Activated CD4-positive, alpha-beta T cell treated with anti-CD3 and anti-CD28 coated beads, Interleukin-2, amount 10 ng/mL, durations not matched to agents 24 days and 14 days (primary cell): ENCODE measurements at regions of chr1 and their contacts with region 1.

Region 1: DNA sequence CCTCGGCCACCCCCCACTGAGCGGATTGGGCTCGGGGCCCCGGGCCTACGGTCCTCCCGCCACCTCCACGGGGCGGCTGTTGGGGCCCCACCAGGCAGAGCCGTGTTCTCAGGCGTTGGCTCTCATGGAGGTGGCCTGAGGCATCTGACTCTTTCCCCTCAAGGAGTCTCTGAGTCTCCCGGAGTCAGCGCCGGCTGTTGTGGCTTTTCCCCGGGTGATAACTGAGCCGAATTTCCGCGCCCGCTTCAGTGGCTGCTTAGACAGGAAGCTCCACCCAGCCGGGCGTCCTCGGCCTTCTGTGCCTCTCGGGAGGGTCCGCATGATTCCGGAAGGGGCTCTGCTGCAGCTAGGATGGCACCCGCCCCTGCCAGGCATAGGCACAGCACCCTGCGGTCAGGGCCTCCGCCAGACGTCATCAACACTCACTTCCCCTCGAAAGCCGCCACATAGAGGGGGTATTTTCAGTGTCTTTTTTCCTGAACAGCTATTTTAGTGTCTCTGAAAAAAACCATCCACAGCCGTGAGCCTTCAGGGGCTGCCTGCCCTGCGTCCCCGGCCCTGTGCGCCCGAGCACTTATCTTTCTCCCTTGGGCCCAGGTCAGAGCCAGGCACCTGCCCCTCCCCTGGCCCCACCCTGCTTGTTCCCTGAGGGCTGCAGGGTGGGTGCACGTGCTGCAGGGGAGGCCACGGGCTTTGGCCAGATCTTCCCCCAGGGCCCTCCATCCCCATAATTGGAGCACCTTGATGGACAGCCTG is 72.9 kb downstream of the SKI start:
- DNase-seq: peak; percentile 95
- H3K4me3 Mint-ChIP-seq: peak overlapping the region; percentile 83
- H3K27ac Mint-ChIP-seq: peak overlapping the region; percentile 94
- H3K4me1 Mint-ChIP-seq: peaks cover 27% of the 10 kb centered on the region
- H3K27me3 Mint-ChIP-seq: no peaks in the 10 kb centered on the region

Region 2: DNA sequence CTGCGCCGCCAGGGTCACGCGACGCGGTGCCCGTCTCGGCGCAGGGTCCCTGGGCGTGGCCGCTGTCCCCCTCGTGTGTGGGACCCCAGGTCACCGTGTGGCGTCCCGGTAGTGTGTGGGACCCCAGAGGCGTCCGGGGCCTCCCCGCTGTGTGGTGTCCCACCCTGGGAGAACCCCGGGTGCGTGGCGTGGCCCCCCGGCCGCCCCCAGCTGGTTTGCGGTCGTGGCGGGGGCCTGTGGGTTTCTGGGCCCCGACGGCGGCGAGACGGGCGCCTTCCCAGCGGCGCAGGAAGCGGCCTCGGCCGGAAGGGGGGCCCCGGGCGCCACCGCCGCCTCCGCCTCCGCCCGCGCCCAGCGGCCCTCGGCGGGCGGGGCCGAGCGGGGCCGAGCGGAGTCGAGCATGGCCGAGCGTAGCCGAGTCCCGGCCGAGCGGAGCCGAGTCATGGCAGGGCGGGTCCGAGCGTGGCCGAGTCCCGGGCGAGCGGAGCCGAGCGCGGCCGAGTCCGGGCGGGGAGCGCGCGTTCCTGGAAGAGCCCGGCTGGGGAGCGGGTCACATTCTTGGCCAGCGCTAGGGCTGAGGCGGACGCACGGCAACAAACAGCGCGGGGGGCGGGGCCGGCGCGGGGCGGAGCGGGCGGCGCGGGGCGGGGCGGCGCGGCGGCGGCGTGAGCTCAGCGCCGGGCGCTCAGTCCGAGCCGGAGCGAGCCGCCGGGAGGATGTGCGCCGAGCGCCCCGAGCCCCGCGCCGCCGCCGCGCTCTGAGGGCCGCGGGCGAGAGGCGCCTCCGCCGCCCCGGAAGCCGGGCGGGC is 73.5 kb before region 1 on chr1:
- intact Hi-C with region 1: loop called (anchors 1 kb)
- DNase-seq: peak; percentile 99
- H3K4me3 Mint-ChIP-seq: peak overlapping the region; percentile 62
- H3K27ac Mint-ChIP-seq: peak overlapping the region; percentile 71
- H3K4me1 Mint-ChIP-seq: peaks cover 24% of the 10 kb centered on the region
- H3K27me3 Mint-ChIP-seq: peaks cover 9% of the 10 kb centered on the region

Region 3: DNA sequence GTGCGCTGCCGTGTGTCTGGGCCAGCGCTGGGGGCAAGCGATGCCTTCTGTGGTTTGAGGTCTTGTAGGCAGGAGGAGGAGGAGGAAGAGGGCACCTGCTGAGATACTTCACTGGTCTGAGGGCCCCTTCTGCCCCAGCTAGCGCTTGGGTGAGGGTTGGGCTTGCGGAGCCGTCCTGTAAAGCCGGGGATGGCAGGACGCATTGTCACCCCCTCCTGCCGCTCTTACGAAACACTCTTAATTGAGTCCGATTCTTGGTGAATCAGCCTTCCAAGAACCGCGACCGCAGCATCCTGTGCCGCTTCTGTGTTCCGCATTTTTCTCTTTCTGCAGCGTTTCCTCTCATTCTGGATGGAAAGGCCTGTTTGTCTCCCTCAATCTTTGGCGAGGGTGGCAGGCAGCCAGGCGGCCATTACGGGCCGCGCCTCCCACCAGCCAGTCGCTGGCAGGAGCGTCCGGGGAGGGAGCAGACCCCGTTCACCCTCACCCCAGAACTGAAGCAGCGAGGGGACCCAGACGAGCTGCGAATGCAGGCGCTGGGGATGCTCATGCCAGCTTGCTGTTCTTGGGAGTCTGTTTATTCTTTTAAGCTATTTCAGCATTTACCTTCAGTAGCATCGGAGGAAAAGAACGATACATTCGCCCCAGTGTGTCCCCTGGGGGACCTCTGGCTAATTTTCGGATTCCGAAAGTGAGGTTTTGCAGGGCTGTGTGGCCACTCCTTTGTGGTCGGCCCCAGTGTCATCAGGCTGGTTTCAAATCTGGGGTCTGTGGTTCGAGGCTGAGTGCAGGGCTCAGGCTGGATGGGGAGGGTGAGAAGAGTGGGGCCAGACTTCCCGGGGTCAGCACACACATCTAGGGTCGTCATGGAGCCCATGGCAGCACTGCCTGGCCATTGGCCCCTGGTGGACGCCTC is 10.2 kb before region 1 on chr1:
- intact Hi-C with region 1: loop called (anchors 1 kb)
- DNase-seq: peak; percentile 94
- H3K4me3 Mint-ChIP-seq: peak overlapping the region; percentile 86
- H3K27ac Mint-ChIP-seq: peak overlapping the region; percentile 95
- H3K4me1 Mint-ChIP-seq: peaks cover 67% of the 10 kb centered on the region
- H3K27me3 Mint-ChIP-seq: no peaks in the 10 kb centered on the region

Region 4: GRCh38 chr1:2525920-2526823 is 225.1 kb after region 1 on chr1 and contains the start of gene PANK4:
- intact Hi-C with region 1: loop called (anchors 10 kb)
- DNase-seq: peak; percentile 97
- H3K4me3 Mint-ChIP-seq: peak within 1 kb of the TSS; percentile 85
- H3K27ac Mint-ChIP-seq: peak within 1 kb of the TSS; percentile 96
- H3K4me1 Mint-ChIP-seq: peaks cover 38% of the 10 kb centered on the region
- H3K27me3 Mint-ChIP-seq: peaks cover 15% of the 10 kb centered on the region
- total RNA-seq, gene PANK4: 55.2 and 56.7 TPM in 2 replicates